OCI-LY7 (cell line): ENCODE measurements at regions of chr20 and their contacts with region 1.

Region 1: DNA sequence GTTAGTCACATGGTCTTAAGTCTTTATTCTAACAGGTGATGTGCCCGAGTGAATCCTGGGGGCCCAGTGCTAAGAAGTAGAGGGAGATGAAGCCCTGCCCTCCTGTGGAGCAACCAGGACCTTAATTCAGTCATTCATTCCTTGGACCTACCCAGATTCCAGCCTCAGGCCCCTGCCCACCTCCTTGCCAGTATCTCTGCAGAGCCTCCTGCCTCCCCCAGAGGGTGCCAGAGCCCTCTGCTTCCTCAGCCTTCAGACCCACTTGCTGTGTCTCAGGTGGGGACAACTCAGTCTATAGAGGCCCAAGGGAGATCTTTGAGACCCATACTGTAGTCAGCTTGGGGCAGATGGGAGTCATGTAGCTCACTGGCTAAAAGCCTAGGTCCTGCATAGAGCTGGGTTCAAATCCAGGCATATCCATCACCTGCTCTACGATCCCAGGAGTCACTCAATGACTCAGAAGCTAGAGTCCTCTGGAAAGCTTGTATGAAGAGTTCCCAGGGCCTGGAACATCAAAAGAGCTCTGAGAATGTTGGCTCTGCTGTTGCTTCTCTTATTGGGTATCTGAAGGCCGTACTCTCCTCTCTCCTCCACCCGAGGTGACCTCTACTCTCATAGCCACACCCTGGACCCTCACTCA is 3.9 kb upstream of the SIGLEC1 start:
- DNase-seq: peak; percentile 74
- H3K4me3 ChIP-seq: no peak overlapping the region
- H3K27ac ChIP-seq: no peak overlapping the region
- H3K4me1 ChIP-seq: peaks cover 13% of the 10 kb centered on the region
- CTCF ChIP-seq: peak; percentile 87

Region 2: DNA sequence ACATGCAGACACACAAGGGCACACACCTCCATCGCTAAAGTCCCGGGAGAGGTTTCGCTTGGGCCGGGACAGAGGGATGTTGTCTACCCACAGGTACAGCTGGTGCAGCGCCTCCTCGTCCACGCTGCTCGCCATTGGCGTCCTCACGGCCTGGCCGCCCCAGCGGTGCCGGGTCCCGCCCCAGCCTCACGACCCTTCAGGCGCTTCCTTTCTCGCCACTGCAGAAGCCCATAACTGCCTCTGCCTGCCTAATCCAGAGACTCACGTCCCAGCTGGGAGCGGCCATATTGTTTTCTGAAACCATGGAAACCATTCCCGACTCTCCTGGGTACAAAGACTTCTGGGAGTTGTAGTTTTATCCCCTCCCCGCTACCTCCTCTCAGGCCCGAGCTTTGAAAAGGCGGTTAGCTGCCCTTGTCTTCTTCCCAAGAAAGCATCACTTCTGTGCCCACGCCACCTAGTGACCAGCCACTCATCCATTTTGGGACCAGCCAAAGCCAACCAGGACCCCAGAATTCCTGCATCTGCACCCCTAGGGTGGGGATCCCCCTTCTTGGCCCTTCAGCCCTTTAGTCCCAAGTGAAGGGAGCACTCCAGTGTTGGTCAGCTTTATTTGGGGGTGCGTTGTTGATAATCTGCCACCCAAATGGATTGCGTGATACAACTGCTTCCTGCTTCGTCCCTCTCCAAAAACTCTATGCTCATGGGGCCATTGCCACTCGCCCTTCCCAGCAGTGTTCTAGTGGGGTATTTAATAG is 65.0 kb after region 1 on chr20 and contains the start of gene SPEF1:
- CTCF ChIA-PET with region 1: no interaction called
- POLR2A ChIA-PET with region 1: no interaction called
- intact Hi-C with region 1: loop called (anchors 5 kb)
- DNase-seq: peak; percentile 82
- H3K4me3 ChIP-seq: peak within 1 kb of the TSS; percentile 63
- H3K27ac ChIP-seq: no peak within 1 kb of the TSS
- H3K4me1 ChIP-seq: peaks cover 20% of the 10 kb centered on the region
- CTCF ChIP-seq: peak; percentile 68
- total RNA-seq, gene SPEF1: 0.09 and 0.10 TPM in 2 replicates